ENCODE measurements at regions of chr21 and their contacts with region 1.

Region 1: GRCh38 chr21:15775981-15776380 is 46.2 kb downstream of the USP25 start:
- DNase-seq: no peak
- H3K4me3 ChIP-seq: no peak overlapping the region
- H3K27ac ChIP-seq: no peak overlapping the region
- H3K4me1 ChIP-seq: no peaks in the 10 kb centered on the region
- CTCF ChIP-seq: no peak

Region 2: DNA sequence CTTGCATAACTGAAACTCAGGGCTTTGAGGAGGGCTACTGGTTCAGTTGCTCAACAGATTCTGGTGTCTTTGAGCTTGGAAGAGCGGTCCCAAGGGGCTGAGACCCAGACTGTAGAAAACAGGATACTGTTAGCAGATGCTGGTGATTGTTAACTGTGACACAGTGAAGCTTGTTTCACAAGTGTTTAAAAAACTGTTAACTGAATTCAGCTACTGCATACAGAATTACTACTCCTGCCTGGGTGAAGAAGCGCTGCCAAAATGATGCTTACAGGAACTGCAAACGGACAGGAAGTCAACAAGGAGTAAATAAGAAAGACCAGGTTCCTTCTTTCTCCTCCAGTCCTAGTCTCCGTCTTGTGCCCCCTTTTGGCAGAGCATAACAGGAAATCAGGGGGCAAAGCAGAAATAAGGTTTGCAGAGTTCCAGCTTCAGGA is 241.5 kb before region 1 on chr21:
- CTCF ChIA-PET with region 1: no interaction called
- POLR2A ChIA-PET with region 1: no interaction called
- intact Hi-C with region 1: no loop called
- DNase-seq: peak; percentile 61
- H3K4me3 ChIP-seq: peak overlapping the region; percentile 8
- H3K27ac ChIP-seq: peak overlapping the region; percentile 67
- H3K4me1 ChIP-seq: peaks cover 12% of the 10 kb centered on the region
- CTCF ChIP-seq: peak; percentile 48

Region 3: DNA sequence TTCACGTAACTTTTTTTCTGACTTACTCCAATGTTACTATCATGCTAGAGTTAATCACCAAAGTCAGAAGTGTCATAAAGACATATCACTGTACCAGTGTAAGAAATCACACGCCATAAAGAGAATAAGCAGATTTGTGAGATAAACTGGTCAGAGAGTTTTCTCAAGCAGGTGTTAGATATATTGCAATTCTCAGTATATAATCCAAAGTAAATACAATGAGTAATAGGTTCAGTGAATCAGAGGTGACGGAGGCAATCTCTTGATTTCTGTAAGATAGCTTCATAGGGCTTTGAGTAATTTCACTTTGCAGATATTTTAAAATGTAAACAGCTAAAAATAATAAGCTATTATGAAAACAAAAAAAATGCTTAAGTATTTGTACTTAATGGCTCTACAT is 72.7 kb after region 1 on chr21:
- CTCF ChIA-PET with region 1: no interaction called
- POLR2A ChIA-PET with region 1: no interaction called
- intact Hi-C with region 1: loop called (anchors 2 kb)
- DNase-seq: no peak
- H3K4me3 ChIP-seq: no peak overlapping the region
- H3K27ac ChIP-seq: no peak overlapping the region
- H3K4me1 ChIP-seq: no peaks in the 10 kb centered on the region
- CTCF ChIP-seq: no peak